Caco-2 (cell line): ENCODE measurements at regions of chr9 and their contacts with region 1.

Region 1: DNA sequence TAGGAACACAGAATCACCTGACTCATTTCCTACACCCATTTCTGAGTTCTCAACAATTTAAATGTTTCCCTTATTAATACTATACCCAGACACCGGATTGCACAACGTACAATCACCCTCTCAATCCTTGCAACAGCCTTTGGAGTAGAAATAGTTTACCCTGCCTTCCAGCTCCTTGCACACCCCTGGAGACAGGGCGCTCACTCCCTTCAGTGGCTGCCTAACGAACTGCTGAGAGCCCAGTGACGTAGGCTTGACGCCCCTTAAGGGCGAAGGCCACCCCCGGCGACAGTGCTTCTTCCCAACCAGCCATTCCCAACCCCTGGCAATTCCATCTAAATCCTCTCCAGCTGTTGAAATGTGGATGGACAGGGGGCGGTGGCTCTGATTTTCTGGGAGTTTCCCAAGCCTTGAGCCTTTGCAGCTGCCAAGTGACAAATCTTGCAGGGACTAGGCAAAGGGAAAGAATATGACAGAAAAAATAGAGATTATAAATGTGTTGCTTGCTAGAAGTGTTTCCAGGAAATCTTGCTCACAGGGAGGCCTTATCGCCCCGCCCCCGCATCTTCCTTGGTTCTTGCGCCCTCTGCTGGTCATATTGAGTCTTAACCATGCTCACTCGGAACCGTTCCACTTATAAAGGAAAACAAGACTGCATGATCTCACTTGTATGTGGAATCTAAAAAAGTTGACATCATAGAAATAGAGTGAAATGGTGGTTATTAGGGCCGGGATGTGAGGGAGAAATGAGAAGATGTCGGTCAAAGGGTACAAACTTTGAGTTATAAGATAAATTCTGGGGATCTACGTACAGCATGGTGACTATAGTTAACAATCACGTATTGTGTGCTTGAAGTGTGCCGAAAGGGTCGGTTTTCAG is 7.6 kb upstream of the BARX1 start:
- DNase-seq: peak; percentile 48 to 67
- H3K4me3 ChIP-seq: no peak overlapping the region
- H3K4me3 Mint-ChIP-seq: no peak overlapping the region
- H3K27ac Mint-ChIP-seq: no peak overlapping the region
- H3K4me1 ChIP-seq: no peaks in the 10 kb centered on the region
- H3K4me1 Mint-ChIP-seq: no peaks in the 10 kb centered on the region
- H3K27me3 ChIP-seq: no peaks in the 10 kb centered on the region
- H3K27me3 Mint-ChIP-seq: peaks cover 9% of the 10 kb centered on the region
- CTCF ChIP-seq: peak; percentile 40 to 62

Region 2: DNA sequence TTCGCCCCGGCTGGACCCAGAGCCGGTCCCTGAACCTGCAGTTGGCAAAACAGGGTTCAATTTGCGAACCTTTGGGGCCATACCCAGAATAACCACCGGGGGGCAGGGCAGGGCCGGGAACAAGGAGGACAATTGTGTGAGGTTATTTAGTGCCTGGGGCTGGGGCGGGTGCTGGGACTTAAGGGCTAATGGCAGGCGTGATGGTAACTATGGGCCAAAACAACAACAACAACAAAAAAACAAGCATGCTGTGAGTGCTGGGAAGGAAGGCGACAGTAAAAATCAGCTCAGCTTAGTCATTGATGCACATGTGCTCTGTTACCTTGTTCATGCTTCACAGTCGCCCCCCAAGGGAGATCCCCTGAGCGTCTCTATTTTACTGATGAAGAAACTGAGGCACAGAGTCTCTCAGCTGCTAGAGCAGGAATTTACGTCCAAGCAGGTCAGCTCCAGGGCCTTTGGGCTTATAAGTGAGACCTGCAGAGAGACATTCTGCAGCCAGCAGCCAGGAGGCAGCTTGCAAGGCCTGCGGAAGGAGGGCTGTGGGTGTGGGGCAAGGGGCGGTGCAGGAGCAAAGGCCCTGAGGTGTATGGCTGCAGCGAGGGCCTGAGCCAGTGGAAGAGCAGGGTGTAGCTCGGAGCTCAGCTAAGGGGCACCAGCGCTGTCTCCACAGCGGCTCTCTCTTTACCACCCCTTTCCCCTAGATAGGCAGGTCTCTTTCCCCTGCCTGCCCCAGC is 280.4 kb before region 1 on chr9:
- CTCF ChIA-PET with region 1: no interaction called
- POLR2A ChIA-PET with region 1: no interaction called
- intact Hi-C with region 1: loop called (anchors 1 kb)
- DNase-seq: peak; percentile 58 to 63
- H3K4me3 ChIP-seq: no peak overlapping the region
- H3K4me3 Mint-ChIP-seq: no peak overlapping the region
- H3K27ac Mint-ChIP-seq: peak overlapping the region; percentile 15
- H3K4me1 ChIP-seq: no peaks in the 10 kb centered on the region
- H3K4me1 Mint-ChIP-seq: peaks cover 4% of the 10 kb centered on the region
- H3K27me3 ChIP-seq: no peaks in the 10 kb centered on the region
- H3K27me3 Mint-ChIP-seq: no peaks in the 10 kb centered on the region
- CTCF ChIP-seq: peak; percentile 53

Region 3: GRCh38 chr9:93820667-93821306 is 142.0 kb before region 1 on chr9:
- CTCF ChIA-PET with region 1: no interaction called
- POLR2A ChIA-PET with region 1: no interaction called
- intact Hi-C with region 1: loop called (anchors 2 kb)
- DNase-seq: peak in 1 of 2 experiments; percentile 21
- H3K4me3 ChIP-seq: no peak overlapping the region
- H3K4me3 Mint-ChIP-seq: no peak overlapping the region
- H3K27ac Mint-ChIP-seq: no peak overlapping the region
- H3K4me1 ChIP-seq: no peaks in the 10 kb centered on the region
- H3K4me1 Mint-ChIP-seq: no peaks in the 10 kb centered on the region
- H3K27me3 ChIP-seq: no peaks in the 10 kb centered on the region
- H3K27me3 Mint-ChIP-seq: peaks cover 7% of the 10 kb centered on the region
- CTCF ChIP-seq: peak in 1 of 2 experiments; percentile 28